Mammary epithelial cell (primary cell): ENCODE measurements at regions of chr1 and their contacts with region 1.

Region 1: DNA sequence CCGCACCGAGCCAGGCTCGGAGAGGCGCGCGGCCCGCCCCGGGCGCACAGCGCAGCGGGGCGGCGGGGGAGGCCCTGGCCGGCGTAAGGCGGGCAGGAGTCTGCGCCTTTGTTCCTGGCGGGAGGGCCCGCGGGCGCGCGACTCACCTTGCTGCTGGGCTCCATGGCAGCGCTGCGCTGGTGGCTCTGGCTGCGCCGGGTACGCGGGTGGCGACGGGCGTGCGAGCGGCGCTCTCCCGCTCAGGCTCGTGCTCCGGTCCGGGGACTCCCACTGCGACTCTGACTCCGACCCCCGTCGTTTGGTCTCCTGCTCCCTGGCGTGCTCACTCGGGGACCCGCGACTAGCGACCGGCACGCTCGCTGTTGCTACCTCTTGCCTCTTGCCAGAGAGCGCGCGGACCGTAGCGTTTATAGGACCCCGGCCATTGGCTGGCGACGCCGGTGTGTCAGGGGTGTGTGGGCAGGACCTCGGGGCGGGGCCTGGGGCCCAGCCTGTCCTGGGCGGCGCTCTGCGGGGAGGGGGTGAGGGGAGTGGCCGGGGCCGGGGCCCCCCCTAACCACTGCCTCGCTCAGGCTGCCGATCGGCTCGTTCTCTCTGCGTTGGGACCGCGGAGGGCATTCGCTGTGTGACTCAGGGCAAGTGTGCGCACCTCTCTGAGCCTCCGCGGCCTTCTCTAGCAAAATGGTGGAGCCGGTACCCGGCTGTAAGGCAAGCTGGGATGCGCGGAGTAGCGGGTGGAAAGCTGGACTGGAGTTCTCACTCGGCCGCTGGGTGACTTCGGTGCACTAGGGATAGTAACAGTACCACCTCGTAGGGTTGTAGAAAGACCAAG is at the start of gene SLC2A1:
- DNase-seq: peak; percentile 96
- H3K4me3 ChIP-seq: peak within 1 kb of the TSS; percentile 69 to 87 (median 83)
- H3K27ac ChIP-seq: peak within 1 kb of the TSS; percentile 82
- H3K4me1 ChIP-seq: peaks cover 45% of the 10 kb centered on the region
- H3K27me3 ChIP-seq: no peaks in the 10 kb centered on the region
- CTCF ChIP-seq: no peak
- total RNA-seq, gene SLC2A1: 471 to 738 TPM

Region 2: GRCh38 chr1:42913426-42914091 is 45.1 kb before region 1 on chr1:
- CTCF ChIA-PET with region 1: no interaction called
- dilution Hi-C with region 1: no loop called
- in situ Hi-C with region 1: no loop called
- intact Hi-C with region 1: no loop called
- DNase-seq: peak; percentile 63
- H3K4me3 ChIP-seq: no peak overlapping the region
- H3K27ac ChIP-seq: no peak overlapping the region
- H3K4me1 ChIP-seq: no peaks in the 10 kb centered on the region
- H3K27me3 ChIP-seq: no peaks in the 10 kb centered on the region
- CTCF ChIP-seq: peak; percentile 76 to 79

Region 3: DNA sequence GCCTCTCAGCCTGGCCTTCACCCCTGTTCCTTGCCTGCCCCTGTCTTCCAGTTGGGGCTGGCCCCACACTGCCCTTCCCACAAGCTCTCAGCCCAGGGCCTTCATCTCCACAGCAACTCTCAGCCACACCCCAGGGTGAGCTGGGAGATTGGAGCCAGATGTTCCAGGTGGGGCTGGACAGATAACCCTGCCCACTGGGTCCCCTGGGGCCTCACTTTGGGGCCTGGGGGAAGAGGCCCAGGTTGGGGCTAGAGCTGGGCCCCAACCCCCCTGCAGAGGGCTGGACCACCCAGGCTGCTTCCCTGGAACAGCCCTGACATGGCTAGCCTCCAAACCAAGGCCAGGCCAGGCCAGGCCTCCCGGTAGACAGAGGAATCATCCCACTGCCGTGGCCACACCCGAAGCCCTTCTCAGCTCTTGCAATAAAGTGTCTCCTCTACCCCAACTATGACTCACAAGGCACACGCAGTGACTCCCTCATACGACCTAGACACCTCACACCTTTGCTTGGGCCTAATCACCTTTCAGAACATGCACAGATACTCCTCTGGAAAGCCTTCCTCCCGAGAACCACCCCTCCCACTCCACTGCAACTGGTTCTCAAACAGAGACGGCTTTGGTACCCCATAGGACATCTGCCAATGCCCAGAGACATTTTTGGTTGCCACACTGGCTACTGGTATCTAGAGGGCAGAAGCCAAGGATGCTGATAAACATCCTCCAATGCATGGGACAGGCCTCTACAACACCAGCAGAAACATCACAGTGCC is 22.2 kb before region 1 on chr1:
- CTCF ChIA-PET with region 1: interaction called, 3 read pairs
- dilution Hi-C with region 1: no loop called
- in situ Hi-C with region 1: no loop called
- intact Hi-C with region 1: loop called (anchors 2 kb)
- DNase-seq: peak; percentile 95
- H3K4me3 ChIP-seq: no peak overlapping the region
- H3K27ac ChIP-seq: peak overlapping the region; percentile 90
- H3K4me1 ChIP-seq: peaks cover 99% of the 10 kb centered on the region
- H3K27me3 ChIP-seq: no peaks in the 10 kb centered on the region
- CTCF ChIP-seq: no peak

Region 4: DNA sequence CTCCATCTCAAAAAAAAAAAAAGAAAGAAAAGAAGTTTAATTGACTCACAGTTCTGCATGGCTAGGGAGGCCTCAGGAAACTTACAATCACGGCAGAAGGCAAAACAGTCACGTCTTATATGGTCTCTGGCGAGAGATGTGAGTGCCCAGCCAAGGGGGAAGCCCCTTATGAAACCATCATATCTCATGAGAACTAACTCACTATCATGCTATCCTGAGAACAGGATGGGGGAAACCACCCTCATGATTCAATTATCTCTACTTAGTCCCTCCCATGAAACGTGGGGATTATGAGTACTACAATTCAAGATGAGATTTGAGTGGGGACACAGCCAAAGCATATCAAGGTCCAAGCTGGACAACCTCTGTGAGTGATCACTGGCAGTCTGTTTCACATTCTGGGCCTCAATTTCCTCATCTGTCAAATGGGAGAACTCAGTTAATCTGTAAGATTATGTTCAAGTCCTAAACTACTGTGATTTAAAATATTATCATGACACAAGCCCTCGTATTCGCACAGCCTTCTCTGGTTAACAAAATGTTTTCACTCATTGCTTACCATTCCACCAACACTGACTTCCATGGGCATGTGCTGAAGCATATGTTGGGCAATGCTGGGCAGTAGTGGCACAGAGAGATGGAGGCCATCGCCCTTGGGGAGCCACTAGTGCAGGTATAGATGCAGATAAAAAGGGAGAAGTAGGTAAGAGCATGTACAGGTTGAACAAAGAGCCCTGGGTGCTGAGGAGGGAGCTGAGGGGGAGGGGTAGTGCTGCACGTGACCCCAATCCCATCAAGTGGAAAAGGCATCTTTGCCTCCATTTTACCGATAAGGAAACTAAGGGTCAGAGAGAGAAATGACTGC is 46.1 kb after region 1 on chr1:
- CTCF ChIA-PET with region 1: no interaction called
- dilution Hi-C with region 1: loop called (anchors 5 kb)
- in situ Hi-C with region 1: no loop called
- intact Hi-C with region 1: no loop called
- DNase-seq: no peak
- H3K4me3 ChIP-seq: no peak overlapping the region
- H3K27ac ChIP-seq: no peak overlapping the region
- H3K4me1 ChIP-seq: peaks cover 14% of the 10 kb centered on the region
- H3K27me3 ChIP-seq: no peaks in the 10 kb centered on the region
- CTCF ChIP-seq: no peak

Region 5: DNA sequence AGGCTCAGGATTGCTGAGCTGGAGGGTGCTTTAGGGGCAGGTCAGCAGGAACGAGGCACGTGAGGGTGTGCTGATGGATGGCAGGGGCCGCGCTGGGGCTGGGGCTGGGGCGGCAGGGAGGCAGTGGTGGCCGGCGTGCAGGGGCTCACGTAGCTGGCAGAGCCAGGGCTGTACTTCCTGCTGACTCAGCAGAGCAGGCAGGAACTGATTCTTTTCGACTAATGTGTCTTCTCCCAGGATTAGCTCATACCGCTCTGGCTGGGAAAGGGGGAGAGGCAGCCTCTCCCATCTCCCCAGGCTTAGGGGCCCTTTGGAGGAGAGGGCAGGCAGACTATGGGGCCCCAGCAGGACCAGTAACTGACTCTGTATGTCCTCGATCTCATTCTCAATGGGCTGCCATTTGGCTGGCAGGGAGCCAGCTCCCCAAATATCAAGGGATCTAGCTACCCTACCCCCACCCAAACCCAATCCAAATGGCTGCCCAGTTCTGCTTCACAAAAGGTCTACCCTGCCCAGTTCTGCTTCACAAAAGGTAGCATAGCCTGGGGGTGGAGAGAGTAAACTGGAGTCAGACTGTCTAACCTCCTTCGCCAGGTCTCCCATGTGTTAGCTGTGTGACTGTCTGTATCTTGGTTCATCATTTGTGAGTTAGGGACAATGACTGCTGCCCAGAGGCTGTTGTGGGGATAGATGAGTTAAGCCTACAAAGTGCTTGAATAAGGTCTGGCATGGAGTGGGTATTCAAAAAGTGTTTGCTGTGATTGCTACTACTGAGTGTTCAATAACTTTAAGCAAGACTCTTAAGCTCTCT is 100.0 kb after region 1 on chr1:
- CTCF ChIA-PET with region 1: no interaction called
- dilution Hi-C with region 1: no loop called
- in situ Hi-C with region 1: no loop called
- intact Hi-C with region 1: loop called (anchors 5 kb)
- DNase-seq: peak; percentile 54
- H3K4me3 ChIP-seq: no peak overlapping the region
- H3K27ac ChIP-seq: no peak overlapping the region
- H3K4me1 ChIP-seq: peaks cover 13% of the 10 kb centered on the region
- H3K27me3 ChIP-seq: no peaks in the 10 kb centered on the region
- CTCF ChIP-seq: no peak